Gastrocnemius medialis (tissue), 4 donors: ENCODE measurements at regions of chr1 and their contacts with region 1.

Region 1: GRCh38 chr1:212375986-212376385 is 38.7 kb downstream of the PACC1 start:
- DNase-seq: no peak
- ATAC-seq: no peak
- H3K4me3 ChIP-seq: no peak overlapping the region
- H3K27ac ChIP-seq: no peak overlapping the region
- H3K4me1 ChIP-seq: no peaks in the 10 kb centered on the region
- H3K27me3 ChIP-seq: no peaks in the 10 kb centered on the region
- CTCF ChIP-seq: no peak
- POLR2A ChIP-seq: no peak

Region 2: GRCh38 chr1:212353181-212353580 is 22.8 kb before region 1 on chr1:
- in situ Hi-C with region 1: no loop called
- intact Hi-C with region 1: no loop called
- DNase-seq: no peak
- ATAC-seq: no peak
- H3K4me3 ChIP-seq: no peak overlapping the region
- H3K27ac ChIP-seq: no peak overlapping the region
- H3K4me1 ChIP-seq: no peaks in the 10 kb centered on the region
- H3K27me3 ChIP-seq: no peaks in the 10 kb centered on the region
- CTCF ChIP-seq: no peak
- POLR2A ChIP-seq: no peak

Region 3: DNA sequence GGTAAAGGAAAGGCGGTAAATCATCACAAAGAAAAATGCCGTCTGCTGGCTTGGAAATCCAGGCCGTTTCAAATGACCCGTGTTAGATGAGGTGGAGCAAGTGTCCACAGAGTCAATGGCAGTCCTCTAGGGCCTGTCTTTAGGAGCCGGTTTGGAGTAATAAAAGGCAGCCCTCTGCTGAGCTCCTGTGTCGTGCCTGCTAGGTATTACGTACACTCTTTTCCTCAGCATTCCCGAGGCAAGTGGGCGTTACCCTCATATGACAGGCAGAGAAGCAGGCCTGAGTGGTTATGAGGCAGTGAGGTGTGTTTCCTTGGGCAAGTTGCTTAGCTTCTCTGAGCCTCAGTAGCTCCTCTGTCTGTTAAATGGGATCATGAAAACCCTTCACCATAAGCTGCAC is 64.4 kb after region 1 on chr1:
- in situ Hi-C with region 1: loop called in 1 of 4 experiments (anchors 10 kb)
- intact Hi-C with region 1: no loop called
- DNase-seq: no peak
- ATAC-seq: no peak
- H3K4me3 ChIP-seq: no peak overlapping the region
- H3K27ac ChIP-seq: no peak overlapping the region
- H3K4me1 ChIP-seq: peaks cover 8 to 22% of the 10 kb centered on the region in 2 donors
- H3K27me3 ChIP-seq: no peaks in the 10 kb centered on the region
- CTCF ChIP-seq: no peak
- POLR2A ChIP-seq: no peak